T-cell (primary cell): ENCODE measurements at regions of chr10 and their contacts with region 1.

Region 1: DNA sequence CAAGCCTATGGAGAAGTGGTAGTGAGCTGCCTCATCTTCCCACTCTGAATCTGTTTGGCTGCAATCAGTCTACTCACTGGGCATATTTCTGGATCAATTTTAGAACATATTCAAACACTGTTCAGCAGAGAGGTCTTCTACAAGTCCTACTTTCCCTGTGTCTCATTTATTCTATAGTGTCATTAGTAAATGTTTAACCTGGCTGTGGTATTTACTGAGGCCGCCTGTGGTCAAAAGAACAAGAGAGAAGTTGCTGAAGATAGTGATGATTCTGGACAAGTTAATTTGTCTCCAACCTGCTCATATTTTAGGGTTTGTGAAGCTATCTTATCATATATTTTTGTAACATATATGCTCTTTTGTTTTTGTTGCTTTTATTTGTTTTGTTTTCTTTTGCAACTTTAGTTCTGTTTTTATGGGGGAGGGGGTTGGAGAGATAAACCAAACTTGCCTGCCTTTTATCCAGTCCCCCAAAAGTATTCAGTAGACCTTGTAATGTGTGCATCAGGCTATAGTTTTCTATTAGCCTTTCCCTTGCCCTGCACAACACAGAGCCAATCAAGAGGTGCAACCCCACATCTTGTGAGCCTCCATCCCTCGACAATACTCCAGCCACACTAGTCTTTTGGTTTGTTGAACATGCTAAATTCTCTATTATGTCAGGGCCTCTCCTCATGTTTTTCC is 362.8 kb upstream of the MBL2 start:
- DNase-seq: no peak
- ATAC-seq: no peak
- H3K4me3 ChIP-seq: no peak overlapping the region
- H3K4me3 Mint-ChIP-seq: no peak overlapping the region
- H3K27ac ChIP-seq: no peak overlapping the region
- H3K27ac Mint-ChIP-seq: no peak overlapping the region
- H3K4me1 ChIP-seq: no peaks in the 10 kb centered on the region
- H3K4me1 Mint-ChIP-seq: no peaks in the 10 kb centered on the region
- H3K27me3 ChIP-seq: no peaks in the 10 kb centered on the region
- H3K27me3 Mint-ChIP-seq: no peaks in the 10 kb centered on the region

Region 2: GRCh38 chr10:53422223-53422888 is 287.0 kb after region 1 on chr10:
- CTCF ChIA-PET with region 1: interaction called in 1 of 2 experiments, 11 read pairs
- POLR2A ChIA-PET with region 1: no interaction called
- DNase-seq: no peak
- ATAC-seq: no peak
- H3K4me3 ChIP-seq: no peak overlapping the region
- H3K4me3 Mint-ChIP-seq: no peak overlapping the region
- H3K27ac ChIP-seq: no peak overlapping the region
- H3K27ac Mint-ChIP-seq: no peak overlapping the region
- H3K4me1 ChIP-seq: no peaks in the 10 kb centered on the region
- H3K4me1 Mint-ChIP-seq: no peaks in the 10 kb centered on the region
- H3K27me3 ChIP-seq: no peaks in the 10 kb centered on the region
- H3K27me3 Mint-ChIP-seq: no peaks in the 10 kb centered on the region